ENCODE measurements at regions of chr1 and their contacts with region 1.

Region 1: DNA sequence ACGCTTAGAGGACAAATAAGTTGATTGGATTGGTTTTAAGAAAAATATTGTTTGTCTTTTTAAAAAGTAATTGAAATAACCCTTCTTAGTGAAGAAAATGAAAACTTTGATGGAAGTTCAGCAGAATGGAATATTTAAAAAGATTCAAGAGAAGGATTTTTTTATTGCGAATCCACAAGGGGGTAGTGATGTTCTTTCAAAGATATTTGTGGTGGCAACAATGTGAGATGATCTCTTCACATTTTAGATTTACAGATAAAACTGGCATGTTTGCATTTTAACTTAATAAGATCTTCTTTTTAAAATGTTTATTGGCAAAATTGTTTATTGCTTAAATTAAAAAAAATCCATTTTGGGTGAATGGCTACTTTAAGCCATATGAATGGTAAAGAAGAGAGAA is 8.9 kb downstream of the CAMTA1 start:
- DNase-seq: peak; percentile 32
- ATAC-seq: no peak
- H3K4me3 ChIP-seq: no peak overlapping the region
- H3K27ac ChIP-seq: no peak overlapping the region
- H3K4me1 ChIP-seq: peaks cover 12% of the 10 kb centered on the region
- H3K27me3 ChIP-seq: no peaks in the 10 kb centered on the region
- CTCF ChIP-seq: peak; percentile 33
- EP300 ChIP-seq: no peak
- POLR2A ChIP-seq: no peak
- RAD21 ChIP-seq: no peak

Region 2: DNA sequence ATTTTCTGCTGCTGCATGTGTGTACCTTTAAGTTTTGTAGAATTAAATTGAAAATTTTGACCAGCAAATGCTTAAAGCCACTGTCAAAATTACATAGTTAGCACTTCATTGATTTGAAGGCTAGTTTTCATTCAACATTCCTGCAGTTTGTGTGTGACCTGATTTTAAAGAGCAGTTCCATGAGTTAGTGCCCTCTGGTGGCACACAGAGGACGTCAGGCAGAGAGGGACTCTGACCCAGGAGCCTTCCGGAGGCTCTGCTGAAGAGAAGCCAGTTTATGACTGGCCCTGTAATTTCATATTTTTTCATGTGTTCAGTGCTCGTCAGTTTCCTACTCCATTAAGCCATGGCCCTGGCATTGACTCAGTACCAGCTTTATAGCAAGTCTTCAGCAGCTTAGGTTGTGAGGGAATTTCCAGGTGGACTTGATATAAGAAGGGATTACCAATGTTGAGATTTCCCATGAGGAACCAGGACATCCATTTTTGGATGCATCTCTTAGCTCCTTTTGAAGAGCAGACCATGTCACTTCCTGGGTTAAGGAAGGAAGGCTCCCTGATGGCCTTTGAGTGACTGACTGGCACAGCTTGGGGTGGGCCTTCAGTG is 95.8 kb after region 1 on chr1:
- CTCF ChIA-PET with region 1: interaction called, 18 read pairs
- POLR2A ChIA-PET with region 1: no interaction called
- in situ Hi-C with region 1: loop called (anchors 5 kb)
- intact Hi-C with region 1: loop called (anchors 1 kb)
- DNase-seq: peak; percentile 66
- ATAC-seq: peak; percentile 96
- H3K4me3 ChIP-seq: no peak overlapping the region
- H3K27ac ChIP-seq: no peak overlapping the region
- H3K4me1 ChIP-seq: peaks cover 6% of the 10 kb centered on the region
- H3K27me3 ChIP-seq: no peaks in the 10 kb centered on the region
- CTCF ChIP-seq: peak; percentile 82
- EP300 ChIP-seq: no peak
- POLR2A ChIP-seq: no peak
- RAD21 ChIP-seq: peak; percentile 71

Region 3: DNA sequence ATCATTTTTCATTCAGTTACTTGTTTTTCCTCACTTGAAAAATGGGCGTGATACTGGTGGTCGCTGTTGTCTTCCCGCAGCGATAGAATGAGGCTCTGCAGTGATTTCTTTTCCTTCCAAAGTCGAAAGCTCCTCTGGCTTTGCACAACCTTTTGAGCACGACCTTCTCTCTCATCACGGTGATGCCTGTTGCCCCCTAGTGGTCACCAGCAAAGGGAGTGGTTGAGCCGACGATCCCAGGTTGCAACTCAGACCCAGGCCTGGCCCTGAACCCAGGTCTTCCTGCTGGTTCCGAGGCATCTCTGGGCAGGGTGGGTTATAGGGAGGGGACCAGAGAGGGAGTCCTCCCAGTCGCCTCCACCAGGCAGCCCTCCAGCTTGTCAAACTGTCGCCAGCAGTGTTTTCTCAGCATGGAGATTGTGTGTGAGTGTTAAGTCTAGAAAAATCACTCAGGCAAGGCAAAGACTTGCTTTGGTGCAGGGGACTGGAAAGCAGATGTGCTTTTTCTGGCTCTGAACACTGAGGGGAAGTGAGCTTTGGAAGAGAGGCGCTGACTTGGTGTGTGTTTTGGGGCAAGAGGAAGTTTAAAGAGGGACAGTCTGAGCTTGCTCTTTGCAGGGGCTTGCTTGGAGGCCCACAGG is 276.3 kb after region 1 on chr1:
- CTCF ChIA-PET with region 1: no interaction called
- POLR2A ChIA-PET with region 1: no interaction called
- in situ Hi-C with region 1: loop called (anchors 10 kb)
- intact Hi-C with region 1: loop called (anchors 10 kb)
- DNase-seq: peak; percentile 43
- ATAC-seq: peak; percentile 92
- H3K4me3 ChIP-seq: no peak overlapping the region
- H3K27ac ChIP-seq: no peak overlapping the region
- H3K4me1 ChIP-seq: no peaks in the 10 kb centered on the region
- H3K27me3 ChIP-seq: peaks cover 2 to 14% of the 10 kb centered on the region in 2 experiments; a peak in 2 of 5 replicates
- CTCF ChIP-seq: peak; percentile 87
- EP300 ChIP-seq: no peak
- POLR2A ChIP-seq: no peak
- RAD21 ChIP-seq: peak; percentile 56